ENCODE measurements at regions of chr12 and their contacts with region 1.

Region 1: GRCh38 chr12:45990468-45991283 is at the start of gene SCAF11:
- DNase-seq: peak; percentile 100
- H3K4me3 Mint-ChIP-seq: peak within 1 kb of the TSS; percentile 95
- H3K27ac Mint-ChIP-seq: peak within 1 kb of the TSS; percentile 97
- H3K4me1 Mint-ChIP-seq: peaks cover 46% of the 10 kb centered on the region
- H3K27me3 Mint-ChIP-seq: no peaks in the 10 kb centered on the region
- total RNA-seq, gene SCAF11: 129 to 136 TPM

Region 2: DNA sequence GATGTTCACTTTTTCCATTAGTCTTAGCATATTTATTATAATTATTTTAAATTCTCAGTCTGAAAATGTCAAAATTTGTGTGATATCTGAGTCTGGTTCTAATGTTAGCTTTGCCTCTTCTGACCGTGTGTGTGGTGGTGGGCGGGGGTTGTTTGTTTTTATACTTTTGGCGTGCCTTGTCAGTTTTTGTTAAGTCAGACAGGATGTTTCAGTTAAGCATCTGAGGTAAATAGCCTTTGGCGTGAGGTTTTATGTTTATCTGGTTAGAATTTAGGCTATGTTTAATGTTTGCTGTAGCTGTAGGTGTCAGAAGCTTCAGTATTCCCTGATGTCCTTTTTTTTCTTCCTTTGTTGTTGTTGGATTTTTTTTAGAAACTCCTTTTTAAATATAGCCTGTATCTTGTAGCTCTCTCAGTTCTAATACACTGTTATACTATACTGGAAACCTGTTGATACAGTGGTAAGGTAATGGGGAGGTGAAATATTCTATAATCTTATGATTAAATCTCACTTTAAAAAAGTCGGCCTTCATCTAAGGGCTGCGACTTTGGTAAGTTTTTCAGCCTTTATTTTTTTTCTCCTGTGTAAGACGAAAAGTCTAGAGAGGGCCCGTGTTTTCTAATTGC is 111.9 kb before region 1 on chr12:
- CTCF ChIA-PET with region 1: no interaction called
- POLR2A ChIA-PET with region 1: interaction called, 11 read pairs
- DNase-seq: peak; percentile 62
- H3K4me3 Mint-ChIP-seq: peak overlapping the region; percentile 61
- H3K27ac Mint-ChIP-seq: peak overlapping the region; percentile 89
- H3K4me1 Mint-ChIP-seq: peaks cover 56% of the 10 kb centered on the region
- H3K27me3 Mint-ChIP-seq: no peaks in the 10 kb centered on the region

Region 3: GRCh38 chr12:46020768-46021167 is 30.1 kb after region 1 on chr12:
- CTCF ChIA-PET with region 1: no interaction called
- POLR2A ChIA-PET with region 1: no interaction called
- DNase-seq: no peak
- H3K4me3 Mint-ChIP-seq: no peak overlapping the region
- H3K27ac Mint-ChIP-seq: no peak overlapping the region
- H3K4me1 Mint-ChIP-seq: no peaks in the 10 kb centered on the region
- H3K27me3 Mint-ChIP-seq: peaks cover 23% of the 10 kb centered on the region

Region 4: DNA sequence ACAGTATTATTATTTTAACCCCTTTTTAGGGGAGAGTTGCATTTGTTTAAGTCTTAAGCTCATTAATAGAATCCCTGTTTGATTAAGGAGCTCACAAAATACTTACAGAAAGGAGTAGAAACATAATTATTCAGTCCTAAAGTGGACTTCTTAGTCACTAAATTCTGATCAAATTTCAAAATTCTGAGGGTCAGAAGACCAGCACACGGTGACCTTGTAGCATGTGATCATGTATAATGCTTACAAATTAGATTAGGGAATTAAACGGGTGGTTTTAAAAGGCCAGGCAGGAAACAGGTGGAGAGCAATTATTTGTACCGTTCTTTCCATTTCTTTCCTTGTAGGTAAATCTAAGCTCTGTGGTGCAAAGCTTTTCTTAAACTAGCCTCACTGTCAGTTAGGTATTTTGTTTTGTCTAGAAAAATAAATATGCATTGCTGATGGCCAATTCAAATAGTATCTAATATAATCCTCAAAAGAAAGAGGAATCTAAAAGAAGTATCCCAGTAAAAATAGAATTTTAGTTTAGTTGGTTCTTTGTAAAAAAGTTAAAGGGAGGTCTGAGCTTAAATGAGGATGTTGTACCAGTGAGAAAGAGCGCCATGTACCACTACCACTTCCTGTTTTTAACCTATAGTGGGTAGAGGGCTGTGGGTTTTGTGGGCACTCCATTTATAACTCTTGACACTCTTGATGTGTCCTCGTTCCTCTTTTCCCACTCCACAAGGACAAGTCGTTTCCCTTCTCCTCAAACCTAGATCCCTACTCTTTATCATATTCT is 227.1 kb after region 1 on chr12:
- CTCF ChIA-PET with region 1: no interaction called
- POLR2A ChIA-PET with region 1: interaction called, 28 read pairs
- DNase-seq: peak; percentile 81
- H3K4me3 Mint-ChIP-seq: peak overlapping the region; percentile 73
- H3K27ac Mint-ChIP-seq: peak overlapping the region; percentile 95
- H3K4me1 Mint-ChIP-seq: peaks cover 94% of the 10 kb centered on the region
- H3K27me3 Mint-ChIP-seq: no peaks in the 10 kb centered on the region

Measured in activated CD4-positive, alpha-beta memory T cell treated with anti-CD3 and anti-CD28 coated beads, Interleukin-2, amount 10 ng/mL, durations not matched to agents 7 days and 5 days (primary cell).